Colonic mucosa (tissue), 4 donors: ENCODE measurements at regions of chr11 and their contacts with region 1.

Region 1: DNA sequence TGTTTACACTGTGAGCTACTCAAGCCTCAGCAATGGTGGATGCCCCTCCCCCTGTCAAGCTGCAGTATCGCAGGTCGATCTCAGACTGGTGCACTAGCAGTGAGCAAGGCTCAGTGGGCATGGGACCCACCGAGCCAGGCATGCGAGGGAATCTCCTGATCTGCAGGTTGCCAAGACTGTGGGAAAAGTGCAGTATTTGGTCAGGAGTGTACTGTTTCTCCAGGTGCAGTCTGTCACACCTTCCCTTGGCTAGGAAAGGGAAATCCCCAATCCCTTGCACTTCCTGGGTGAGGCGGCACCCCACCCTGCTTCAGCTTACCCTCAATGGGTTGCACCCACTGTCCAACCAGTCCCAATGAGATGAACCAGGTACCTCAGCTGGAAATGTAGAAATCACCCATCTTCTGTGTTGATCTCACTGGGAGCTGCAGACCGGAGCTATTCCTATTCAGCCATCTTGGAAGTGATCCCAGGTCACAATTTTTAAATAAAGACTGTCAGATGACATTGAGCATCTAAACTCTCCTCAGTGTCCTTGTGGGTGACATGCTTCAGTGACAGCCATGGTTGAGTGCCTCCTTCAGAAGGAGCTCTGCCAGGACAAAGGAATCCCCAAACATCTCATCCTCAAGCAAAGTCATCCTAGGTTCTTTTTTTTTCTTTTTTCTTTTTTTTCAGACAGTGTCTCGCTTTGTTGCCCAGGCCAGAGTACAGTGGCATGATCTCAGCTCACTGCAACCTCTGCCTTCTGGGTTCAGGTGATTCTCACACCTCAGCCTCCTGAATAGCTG is 10.8 kb downstream of the SLC22A24 start:
- DNase-seq: no peak
- H3K4me3 ChIP-seq: no peak overlapping the region
- H3K27ac ChIP-seq: no peak overlapping the region
- H3K4me1 ChIP-seq: no peaks in the 10 kb centered on the region
- H3K27me3 ChIP-seq: no peaks in the 10 kb centered on the region
- CTCF ChIP-seq: no peak

Region 2: DNA sequence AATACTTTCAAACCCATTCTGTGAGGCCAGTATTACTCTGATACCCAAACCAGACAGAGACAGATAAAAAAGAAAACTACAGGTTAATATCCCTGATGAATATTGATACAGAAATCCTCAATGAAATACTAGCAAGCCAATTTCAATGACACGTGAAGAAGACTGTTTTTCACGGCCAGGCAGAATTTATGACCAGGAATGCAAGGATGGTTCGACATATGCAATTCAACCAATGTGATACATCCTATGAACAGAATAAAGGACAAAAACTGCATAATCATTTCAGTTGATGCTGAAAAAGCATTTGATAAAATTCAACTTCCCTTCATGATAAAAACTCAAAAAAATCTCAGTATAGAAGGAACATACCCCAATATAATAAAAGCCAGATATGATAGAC is 33.6 kb before region 1 on chr11:
- intact Hi-C with region 1: no loop called
- DNase-seq: no peak
- H3K4me3 ChIP-seq: no peak overlapping the region
- H3K27ac ChIP-seq: no peak overlapping the region
- H3K4me1 ChIP-seq: no peaks in the 10 kb centered on the region
- H3K27me3 ChIP-seq: no peaks in the 10 kb centered on the region
- CTCF ChIP-seq: no peak

Region 3: GRCh38 chr11:63212742-63213141 is 79.6 kb after region 1 on chr11:
- intact Hi-C with region 1: loop called (anchors 5 kb)
- DNase-seq: no peak
- H3K4me3 ChIP-seq: no peak overlapping the region
- H3K27ac ChIP-seq: no peak overlapping the region
- H3K4me1 ChIP-seq: no peaks in the 10 kb centered on the region
- H3K27me3 ChIP-seq: no peaks in the 10 kb centered on the region
- CTCF ChIP-seq: peak; percentile 48